ENCODE measurements at regions of chr9 and their contacts with region 1.

Region 1: GRCh38 chr9:38068866-38069629 is at the start of gene SHB:
- DNase-seq: peak; percentile 86
- ATAC-seq: peak; percentile 83
- total RNA-seq, gene SHB: 20.3 to 34.6 TPM

Region 2: DNA sequence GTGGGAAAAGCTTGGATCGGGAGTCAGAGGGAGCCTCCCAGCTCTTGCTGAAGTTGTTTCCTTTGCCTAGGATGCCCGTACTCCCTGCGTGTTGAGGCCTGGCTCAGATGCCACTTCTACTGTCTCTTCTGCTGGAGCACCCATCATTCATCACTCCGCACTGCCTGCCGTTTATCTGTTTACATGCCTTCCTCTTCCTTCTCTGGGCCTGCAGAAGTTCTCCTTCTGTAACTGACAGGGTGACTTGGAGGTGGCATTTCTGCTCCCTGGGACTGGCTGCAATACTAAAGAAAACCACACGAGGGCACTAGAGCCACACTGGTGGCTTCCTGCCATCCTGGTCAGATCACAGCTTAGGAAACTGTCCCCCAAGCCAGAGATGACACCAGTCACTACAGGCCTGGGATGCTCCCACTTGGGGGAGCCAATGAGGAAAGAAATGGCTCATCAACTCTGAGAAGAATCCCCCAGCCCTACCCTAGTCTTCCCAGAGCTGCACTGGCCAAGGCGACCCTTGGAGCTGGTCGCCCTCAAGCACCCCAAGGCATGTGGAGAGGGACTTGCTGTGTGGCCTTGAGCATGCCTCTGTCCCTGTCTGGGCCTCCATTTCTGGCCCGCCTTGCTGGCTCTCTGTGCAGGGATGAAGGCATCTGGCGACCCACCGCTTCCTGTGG is 155.4 kb before region 1 on chr9:
- intact Hi-C with region 1: loop called in 1 of 2 experiments (anchors 5 kb)
- DNase-seq: peak; percentile 77
- ATAC-seq: peak; percentile 78 to 90

Region 3: DNA sequence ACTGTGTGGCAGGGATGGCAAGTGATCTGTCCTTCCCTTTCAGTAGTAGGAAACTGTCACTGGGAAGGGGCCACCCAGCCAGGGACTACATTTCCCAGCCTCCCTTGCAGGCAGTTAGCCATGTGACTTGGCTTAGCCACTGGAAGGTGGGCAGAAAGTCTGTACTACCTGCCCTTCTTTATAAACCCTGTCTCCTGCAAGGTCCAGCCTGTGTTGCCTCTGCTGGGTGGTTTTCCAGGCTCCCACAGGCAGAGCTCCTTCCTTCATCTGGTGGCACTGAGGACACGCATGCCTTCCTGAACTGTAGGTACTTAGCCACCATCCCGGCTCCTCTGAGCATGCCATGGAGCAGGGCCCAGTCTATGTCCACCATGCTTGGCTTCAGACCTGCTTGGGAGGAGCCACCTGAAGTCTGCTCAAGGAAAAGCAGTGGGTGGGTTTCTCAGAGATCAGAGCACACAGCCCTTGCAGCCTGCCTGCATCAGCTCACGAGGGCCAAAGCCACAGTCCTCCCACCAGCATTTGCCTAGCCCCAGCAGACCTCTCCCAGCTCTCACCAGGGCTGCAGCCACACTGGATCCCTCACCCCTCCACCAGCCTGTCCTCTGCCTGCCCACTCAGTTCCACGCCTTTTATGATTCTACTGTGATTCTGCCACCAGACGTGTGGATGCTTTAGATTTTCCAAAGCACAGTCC is 148.4 kb before region 1 on chr9:
- intact Hi-C with region 1: loop called (anchors 5 kb)
- DNase-seq: no peak
- ATAC-seq: no peak

Region 4: DNA sequence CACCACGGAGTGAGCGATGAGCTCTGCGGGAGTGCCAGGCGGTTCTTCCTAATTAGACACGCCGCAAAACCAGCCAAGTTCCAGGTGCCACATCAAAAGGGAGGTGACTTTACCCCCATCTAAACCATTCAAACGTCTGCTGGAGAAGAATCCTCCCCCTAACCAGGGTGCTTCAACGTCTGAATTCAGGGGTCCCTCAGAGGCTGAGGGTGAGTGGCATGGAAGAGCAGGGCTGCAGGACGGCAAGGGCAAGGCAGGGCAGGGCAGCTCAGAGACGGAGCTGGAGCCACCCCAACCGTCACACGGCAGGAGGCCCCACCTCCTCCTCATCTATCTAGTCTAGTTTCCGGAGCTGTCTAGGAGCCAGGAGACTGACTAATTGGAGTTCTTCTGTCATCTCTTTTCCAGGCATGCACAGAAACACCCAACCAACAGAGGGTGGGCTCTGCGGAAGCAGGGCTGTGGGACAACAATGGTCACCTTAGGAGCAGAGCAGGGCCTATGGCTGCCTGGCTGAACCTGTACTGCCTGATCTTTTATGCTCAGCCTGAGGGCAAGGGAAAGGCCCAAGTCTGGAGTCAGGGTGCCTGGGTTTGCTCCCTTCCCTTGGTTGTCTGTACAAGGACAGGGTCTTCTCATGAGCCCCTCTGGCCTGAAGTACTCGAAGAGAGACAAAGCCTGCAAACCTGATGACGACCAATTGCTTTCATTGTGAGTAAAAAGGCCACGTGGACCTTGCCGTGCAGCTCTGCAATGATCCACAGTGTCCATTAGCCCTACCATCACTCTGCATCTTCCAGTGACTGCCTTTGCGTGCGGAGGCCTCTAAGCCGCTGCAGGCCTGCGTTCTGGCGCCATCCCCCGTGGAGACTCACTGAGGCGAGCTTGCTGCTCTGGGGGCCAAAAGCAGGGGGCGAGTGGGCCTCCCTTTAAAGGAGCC is 84.1 kb before region 1 on chr9:
- intact Hi-C with region 1: loop called in 1 of 2 experiments (anchors 5 kb)
- DNase-seq: peak; percentile 75
- ATAC-seq: peak; percentile 75 to 89

Region 5: DNA sequence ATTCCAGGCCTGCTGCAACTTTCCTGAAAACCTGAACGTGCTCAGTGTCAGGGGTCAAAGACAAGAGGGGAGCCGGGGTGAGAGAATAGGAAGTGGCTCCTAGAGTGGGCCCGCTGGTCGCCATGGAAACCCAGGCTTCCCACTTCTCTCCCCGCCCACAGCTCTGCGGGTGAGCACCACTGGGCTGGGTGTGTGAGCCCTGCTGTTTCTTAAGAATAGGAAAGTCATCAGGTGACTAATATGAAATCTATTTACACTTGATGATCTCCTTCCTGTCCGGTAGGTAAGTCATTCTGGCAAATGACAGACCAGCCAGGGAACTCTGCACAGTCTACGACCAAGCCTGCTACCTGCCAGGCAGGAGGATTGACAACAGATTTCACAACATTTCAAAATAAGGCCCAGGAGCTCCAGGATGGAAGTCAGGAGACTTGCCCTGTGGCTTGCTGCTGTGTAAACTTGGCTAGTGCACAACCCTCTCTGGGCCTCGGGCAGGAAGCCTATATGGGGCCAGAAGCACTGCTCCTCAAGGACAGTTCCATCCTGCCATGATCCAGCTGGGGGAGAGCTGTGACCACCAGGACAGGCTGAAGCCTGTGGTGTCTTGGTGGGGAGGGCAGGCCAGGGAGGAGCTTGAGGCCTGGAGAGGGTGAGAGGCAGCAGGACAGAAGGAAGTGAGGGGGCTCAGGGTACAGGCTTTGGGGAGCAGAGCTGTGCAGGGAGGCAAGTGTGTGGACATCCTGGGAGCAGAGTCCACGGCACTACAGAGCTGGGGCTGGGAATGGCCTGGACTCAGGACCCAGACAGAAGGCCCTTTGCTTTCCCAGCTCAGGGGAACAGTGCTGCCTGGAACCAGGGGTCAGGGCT is 60.6 kb before region 1 on chr9:
- intact Hi-C with region 1: loop called in 1 of 2 experiments (anchors 10 kb)
- DNase-seq: peak; percentile 70
- ATAC-seq: peak; percentile 24 to 71

Region 6: GRCh38 chr9:38024016-38024681 is 44.9 kb before region 1 on chr9:
- intact Hi-C with region 1: loop called in 1 of 2 experiments (anchors 5 kb)
- DNase-seq: peak; percentile 51
- ATAC-seq: peak; percentile 31 to 44